Calu3 (cell line): ENCODE measurements at regions of chr1 and their contacts with region 1.

Region 1: GRCh38 chr1:47192458-47193384 is 2.9 kb upstream of the PDZK1IP1 start:
- DNase-seq: peak; percentile 82
- H3K4me3 Mint-ChIP-seq: peak overlapping the region; percentile 87
- H3K27ac Mint-ChIP-seq: peak overlapping the region; percentile 83
- H3K4me1 Mint-ChIP-seq: peaks cover 55% of the 10 kb centered on the region
- H3K27me3 Mint-ChIP-seq: peaks cover 2% of the 10 kb centered on the region
- CTCF ChIP-seq: peak; percentile 96

Region 2: DNA sequence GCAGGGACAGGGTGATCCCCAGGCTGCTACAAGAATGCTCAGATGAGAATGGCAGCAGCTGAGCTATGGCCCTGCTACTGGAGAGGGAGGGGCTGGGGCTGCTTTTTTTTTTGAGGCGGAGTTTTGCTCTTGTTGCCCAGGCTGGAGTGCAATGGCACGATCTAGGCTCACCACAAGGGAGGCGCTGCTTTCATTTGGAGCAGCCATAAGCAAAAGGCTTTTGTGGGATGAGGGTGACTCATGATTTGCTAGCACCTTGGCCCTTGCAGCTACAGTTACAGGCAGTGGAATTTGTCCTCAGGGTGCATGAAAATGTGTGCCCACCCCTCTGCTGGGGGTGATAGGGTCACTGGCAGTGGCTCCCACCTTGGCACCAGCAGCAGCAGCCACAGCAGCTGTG is 87.9 kb before region 1 on chr1:
- CTCF ChIA-PET with region 1: no interaction called
- intact Hi-C with region 1: no loop called
- DNase-seq: peak; percentile 51
- H3K4me3 Mint-ChIP-seq: no peak overlapping the region
- H3K27ac Mint-ChIP-seq: no peak overlapping the region
- H3K4me1 Mint-ChIP-seq: peaks cover 9% of the 10 kb centered on the region
- H3K27me3 Mint-ChIP-seq: no peaks in the 10 kb centered on the region
- CTCF ChIP-seq: peak; percentile 24

Region 3: GRCh38 chr1:47262787-47263413 is 70.2 kb after region 1 on chr1:
- CTCF ChIA-PET with region 1: interaction called, 16 read pairs
- intact Hi-C with region 1: loop called (anchors 1 kb)
- DNase-seq: peak; percentile 64
- H3K4me3 Mint-ChIP-seq: no peak overlapping the region
- H3K27ac Mint-ChIP-seq: no peak overlapping the region
- H3K4me1 Mint-ChIP-seq: no peaks in the 10 kb centered on the region
- H3K27me3 Mint-ChIP-seq: no peaks in the 10 kb centered on the region
- CTCF ChIP-seq: peak; percentile 63

Region 4: DNA sequence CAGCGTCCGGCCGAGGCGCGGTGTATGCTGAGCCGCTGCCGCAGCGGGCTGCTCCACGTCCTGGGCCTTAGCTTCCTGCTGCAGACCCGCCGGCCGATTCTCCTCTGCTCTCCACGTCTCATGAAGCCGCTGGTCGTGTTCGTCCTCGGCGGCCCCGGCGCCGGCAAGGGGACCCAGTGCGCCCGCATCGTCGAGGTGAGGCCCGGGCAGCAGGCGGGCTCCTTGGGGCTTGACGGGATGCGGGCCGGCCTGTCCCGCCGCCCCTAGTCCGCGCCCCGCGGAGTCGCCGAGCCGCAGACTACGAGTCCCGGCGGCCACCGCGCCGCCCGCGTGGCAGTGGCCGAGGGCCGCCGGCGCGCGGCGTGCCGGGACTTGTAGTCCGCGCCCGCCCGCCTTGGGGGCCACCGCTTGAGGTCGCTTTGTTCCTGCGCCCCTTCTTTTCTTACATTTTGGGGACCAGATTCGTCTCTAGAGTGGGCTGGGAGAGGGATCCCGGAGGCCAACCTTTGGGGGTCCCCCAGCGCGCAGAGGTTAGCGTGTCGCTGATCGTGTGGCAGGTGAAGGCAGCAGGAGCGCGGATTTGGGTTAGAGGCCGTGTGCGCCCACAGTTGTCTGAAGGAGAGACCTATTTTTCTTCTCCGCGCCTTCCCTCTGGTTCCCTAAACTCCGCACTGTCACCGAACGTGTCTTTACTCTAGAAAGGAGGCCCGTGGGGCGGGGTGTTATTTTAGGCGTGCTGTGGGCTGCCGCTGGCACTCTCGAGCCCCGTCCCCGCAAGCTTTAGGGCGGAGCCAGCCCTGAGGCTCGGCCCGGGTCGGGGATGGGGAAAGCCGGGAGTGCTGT is 141.4 kb after region 1 on chr1:
- CTCF ChIA-PET with region 1: interaction called, 6 read pairs
- intact Hi-C with region 1: loop called (anchors 10 kb)
- DNase-seq: peak; percentile 81
- H3K4me3 Mint-ChIP-seq: no peak overlapping the region
- H3K27ac Mint-ChIP-seq: peak overlapping the region; percentile 86
- H3K4me1 Mint-ChIP-seq: peaks cover 23% of the 10 kb centered on the region
- H3K27me3 Mint-ChIP-seq: no peaks in the 10 kb centered on the region
- CTCF ChIP-seq: peak; percentile 32

Region 5: GRCh38 chr1:47348246-47348645 is 155.5 kb after region 1 on chr1:
- CTCF ChIA-PET with region 1: no interaction called
- intact Hi-C with region 1: no loop called
- DNase-seq: no peak
- H3K4me3 Mint-ChIP-seq: no peak overlapping the region
- H3K27ac Mint-ChIP-seq: no peak overlapping the region
- H3K4me1 Mint-ChIP-seq: peaks cover 14% of the 10 kb centered on the region
- H3K27me3 Mint-ChIP-seq: no peaks in the 10 kb centered on the region
- CTCF ChIP-seq: no peak

Region 6: GRCh38 chr1:47424336-47424982 is 231.7 kb after region 1 on chr1:
- CTCF ChIA-PET with region 1: no interaction called
- intact Hi-C with region 1: loop called (anchors 10 kb)
- DNase-seq: peak; percentile 56
- H3K4me3 Mint-ChIP-seq: no peak overlapping the region
- H3K27ac Mint-ChIP-seq: no peak overlapping the region
- H3K4me1 Mint-ChIP-seq: peaks cover 17% of the 10 kb centered on the region
- H3K27me3 Mint-ChIP-seq: no peaks in the 10 kb centered on the region
- CTCF ChIP-seq: peak; percentile 77